ENCODE measurements at regions of chr3 and their contacts with region 1.

Region 1: DNA sequence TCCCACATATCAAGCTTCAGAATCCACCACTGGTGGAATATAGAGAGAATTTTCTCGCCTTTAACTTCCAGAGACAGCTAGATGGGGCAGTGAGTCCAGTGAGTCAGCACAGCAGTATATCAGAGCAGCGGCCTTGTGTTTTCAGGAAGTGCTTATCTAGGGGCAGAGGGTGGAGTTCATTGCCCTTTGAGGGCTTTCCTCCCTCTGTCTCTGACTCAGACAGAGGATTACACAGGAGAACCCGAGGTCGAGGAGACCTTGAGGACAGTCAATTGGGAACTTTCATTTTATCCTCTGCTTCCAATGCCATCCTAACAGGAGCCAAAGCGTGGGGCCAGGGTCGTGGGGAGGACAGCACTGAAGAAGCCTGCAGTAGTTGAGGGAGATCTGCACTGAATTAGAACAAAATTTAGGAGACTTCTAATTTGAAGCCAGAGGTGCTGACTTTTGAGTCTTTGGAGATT is 109.6 kb upstream of the UMPS start:
- DNase-seq: no peak
- H3K4me3 ChIP-seq: no peak overlapping the region
- H3K27ac ChIP-seq: no peak overlapping the region
- H3K4me1 ChIP-seq: no peaks in the 10 kb centered on the region
- H3K27me3 ChIP-seq: no peaks in the 10 kb centered on the region
- CTCF ChIP-seq: no peak

Region 2: GRCh38 chr3:125261031-125261430 is 640.4 kb after region 1 on chr3:
- intact Hi-C with region 1: loop called (anchors 10 kb)
- DNase-seq: no peak
- H3K4me3 ChIP-seq: no peak overlapping the region
- H3K27ac ChIP-seq: no peak overlapping the region
- H3K4me1 ChIP-seq: no peaks in the 10 kb centered on the region
- H3K27me3 ChIP-seq: no peaks in the 10 kb centered on the region
- CTCF ChIP-seq: no peak

Region 3: GRCh38 chr3:125334675-125335560 is 714.3 kb after region 1 on chr3:
- intact Hi-C with region 1: no loop called
- DNase-seq: no peak
- H3K4me3 ChIP-seq: no peak overlapping the region
- H3K27ac ChIP-seq: no peak overlapping the region
- H3K4me1 ChIP-seq: peaks cover 0 to 9% of the 10 kb centered on the region in 2 donors
- H3K27me3 ChIP-seq: no peaks in the 10 kb centered on the region
- CTCF ChIP-seq: no peak